ENCODE measurements at regions of chr12 and their contacts with region 1.

Region 1: DNA sequence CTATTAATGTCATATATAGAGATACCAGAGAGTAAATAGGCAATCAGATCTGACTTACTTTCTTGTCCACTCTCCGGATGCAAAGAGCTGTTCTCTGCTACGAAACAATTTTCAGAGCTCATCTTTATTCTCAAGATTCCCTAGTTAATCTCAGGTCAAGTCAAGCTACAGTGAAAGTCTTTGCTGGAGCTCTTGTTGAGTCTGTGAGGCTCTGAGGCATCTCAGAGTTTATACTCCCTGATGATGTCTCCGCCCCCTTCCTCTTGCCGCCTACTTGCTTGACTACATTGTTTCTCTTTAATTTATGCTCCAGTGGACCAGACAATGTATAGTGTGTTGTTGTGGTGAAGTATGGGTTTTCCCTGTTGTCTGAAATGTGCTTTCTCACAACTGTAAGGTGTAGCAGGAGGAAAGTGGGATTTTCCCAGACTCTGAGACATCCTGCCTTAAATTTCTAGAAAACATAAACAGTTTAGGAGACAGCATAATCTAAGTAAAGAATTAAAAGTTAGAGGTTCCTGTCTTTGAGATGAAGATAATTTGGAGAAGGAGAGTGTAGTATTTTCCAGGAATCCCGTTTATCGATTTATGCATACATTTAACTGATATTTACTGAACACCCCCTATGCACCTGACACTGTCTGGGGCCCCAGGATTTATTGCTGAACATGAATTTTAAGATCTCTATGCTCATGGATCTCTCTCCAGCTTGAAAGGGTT is at the start of gene CD69:
- DNase-seq: peak; percentile 67
- ATAC-seq: peak; percentile 55
- H3K4me3 Mint-ChIP-seq: peak within 1 kb of the TSS; percentile 93
- H3K27ac Mint-ChIP-seq: peak within 1 kb of the TSS; percentile 94
- H3K4me1 Mint-ChIP-seq: peaks cover 38% of the 10 kb centered on the region
- H3K27me3 Mint-ChIP-seq: no peaks in the 10 kb centered on the region
- total RNA-seq, gene CD69: 111 to 116 TPM

Region 2: DNA sequence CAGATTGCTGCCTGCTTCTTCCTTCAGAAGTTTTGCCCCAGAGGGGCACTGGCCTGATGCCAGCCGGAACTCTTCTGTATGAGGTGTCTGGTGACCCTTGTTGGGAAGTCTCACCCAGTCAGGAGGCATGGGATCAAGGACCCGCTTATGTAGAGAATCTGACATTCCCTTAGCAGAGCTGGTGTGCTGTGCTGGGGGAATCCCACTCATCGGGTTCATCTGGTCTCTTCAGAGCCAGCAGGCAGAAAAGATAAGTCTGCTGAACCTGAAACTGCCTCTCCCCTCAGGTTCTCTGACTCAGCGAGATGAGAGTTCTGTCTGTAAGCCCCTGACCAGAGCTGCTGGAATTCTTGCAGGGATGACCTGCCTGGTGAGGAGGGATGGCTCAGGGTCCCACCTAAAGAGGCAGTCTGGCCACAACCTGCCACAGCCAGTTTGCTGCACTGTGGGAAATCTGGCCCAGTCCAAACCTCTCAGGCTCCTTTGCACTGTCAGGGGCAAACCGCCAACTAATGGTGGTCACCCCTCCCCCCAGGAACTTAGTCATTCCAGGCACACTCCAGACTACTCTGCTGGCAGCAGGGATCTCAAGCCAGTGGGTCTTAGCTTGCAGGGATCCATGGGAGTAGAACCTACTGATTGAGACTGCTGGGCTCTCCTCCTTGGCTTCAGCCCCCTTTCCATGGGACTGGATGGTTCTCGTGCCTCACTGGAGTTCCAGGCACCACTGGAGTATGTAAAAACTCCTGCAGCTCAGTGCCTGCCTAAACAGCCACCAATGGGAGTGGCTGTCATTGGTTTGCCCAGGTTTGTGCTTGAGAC is 87.2 kb before region 1 on chr12:
- POLR2A ChIA-PET with region 1: interaction called, 159 read pairs
- DNase-seq: peak; percentile 74
- ATAC-seq: peak; percentile 39
- H3K4me3 Mint-ChIP-seq: peak overlapping the region; percentile 95
- H3K27ac Mint-ChIP-seq: peak overlapping the region; percentile 99
- H3K4me1 Mint-ChIP-seq: peaks cover 62% of the 10 kb centered on the region
- H3K27me3 Mint-ChIP-seq: no peaks in the 10 kb centered on the region

Region 3: GRCh38 chr12:9750276-9751203 is 10.3 kb before region 1 on chr12:
- POLR2A ChIA-PET with region 1: interaction called, 34 read pairs
- DNase-seq: peak; percentile 59
- ATAC-seq: peak; percentile 62
- H3K4me3 Mint-ChIP-seq: peak overlapping the region; percentile 77
- H3K27ac Mint-ChIP-seq: peak overlapping the region; percentile 75
- H3K4me1 Mint-ChIP-seq: peaks cover 47% of the 10 kb centered on the region
- H3K27me3 Mint-ChIP-seq: no peaks in the 10 kb centered on the region

Region 4: DNA sequence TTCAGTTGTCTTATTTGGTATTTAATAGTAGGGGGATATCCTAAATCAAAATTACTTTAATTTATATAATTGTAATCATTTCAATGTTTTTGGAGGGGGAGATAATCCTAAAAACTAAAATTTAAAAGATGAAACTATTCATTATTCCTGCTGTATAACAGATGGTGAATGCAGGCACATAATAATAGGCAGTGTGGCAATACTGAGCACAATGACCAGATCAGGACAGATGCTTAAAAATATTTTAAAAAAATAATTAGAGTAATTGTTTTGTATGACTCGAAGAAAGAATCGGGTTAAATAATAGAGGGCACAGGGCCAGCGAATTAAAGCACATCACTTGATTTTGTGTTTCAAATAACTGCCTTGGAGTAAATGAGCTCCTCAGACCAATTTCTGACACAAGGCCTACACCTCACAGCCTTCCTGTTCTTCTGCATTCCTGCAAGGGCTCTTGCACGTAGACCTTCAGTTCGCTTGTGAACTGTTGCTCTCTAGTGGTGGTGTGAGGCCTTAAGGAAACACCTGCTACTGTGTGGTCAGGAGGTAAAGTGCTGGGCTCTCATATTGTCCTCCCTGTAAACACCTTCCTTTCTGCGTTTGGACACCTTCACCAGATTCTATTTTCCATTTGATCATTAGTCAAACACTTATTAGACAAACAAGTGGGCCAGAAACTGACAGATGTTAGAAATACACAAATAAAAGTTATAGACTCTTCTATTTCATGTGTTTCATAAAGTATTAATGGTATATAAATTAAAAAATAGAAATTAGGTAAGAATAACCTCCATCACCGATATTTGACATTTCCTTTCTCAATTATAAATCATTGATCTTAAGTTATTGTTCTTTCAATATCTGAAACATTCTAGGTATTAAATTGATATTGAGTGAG is 37.1 kb after region 1 on chr12:
- POLR2A ChIA-PET with region 1: interaction called, 420 read pairs
- DNase-seq: no peak
- ATAC-seq: peak; percentile 84
- H3K4me3 Mint-ChIP-seq: peak overlapping the region; percentile 35
- H3K27ac Mint-ChIP-seq: peak overlapping the region; percentile 68
- H3K4me1 Mint-ChIP-seq: peaks cover 39% of the 10 kb centered on the region
- H3K27me3 Mint-ChIP-seq: peaks cover 4% of the 10 kb centered on the region

Region 5: GRCh38 chr12:9827209-9827888 is 66.5 kb after region 1 on chr12 and contains the start of gene KLRF1:
- POLR2A ChIA-PET with region 1: no interaction called
- DNase-seq: no peak
- ATAC-seq: no peak
- H3K4me3 Mint-ChIP-seq: no peak within 1 kb of the TSS
- H3K27ac Mint-ChIP-seq: no peak within 1 kb of the TSS
- H3K4me1 Mint-ChIP-seq: peaks cover 3% of the 10 kb centered on the region
- H3K27me3 Mint-ChIP-seq: peaks cover 5% of the 10 kb centered on the region
- total RNA-seq, gene KLRF1: 0.80 to 0.96 TPM

Region 6: GRCh38 chr12:10385166-10385613 is 624.3 kb after region 1 on chr12:
- POLR2A ChIA-PET with region 1: interaction called, 20 read pairs
- DNase-seq: no peak
- ATAC-seq: peak; percentile 43
- H3K4me3 Mint-ChIP-seq: peak overlapping the region; percentile 84
- H3K27ac Mint-ChIP-seq: peak overlapping the region; percentile 88
- H3K4me1 Mint-ChIP-seq: peaks cover 61% of the 10 kb centered on the region
- H3K27me3 Mint-ChIP-seq: no peaks in the 10 kb centered on the region